ENCODE measurements at regions of chr1 and their contacts with region 1.

Region 1: DNA sequence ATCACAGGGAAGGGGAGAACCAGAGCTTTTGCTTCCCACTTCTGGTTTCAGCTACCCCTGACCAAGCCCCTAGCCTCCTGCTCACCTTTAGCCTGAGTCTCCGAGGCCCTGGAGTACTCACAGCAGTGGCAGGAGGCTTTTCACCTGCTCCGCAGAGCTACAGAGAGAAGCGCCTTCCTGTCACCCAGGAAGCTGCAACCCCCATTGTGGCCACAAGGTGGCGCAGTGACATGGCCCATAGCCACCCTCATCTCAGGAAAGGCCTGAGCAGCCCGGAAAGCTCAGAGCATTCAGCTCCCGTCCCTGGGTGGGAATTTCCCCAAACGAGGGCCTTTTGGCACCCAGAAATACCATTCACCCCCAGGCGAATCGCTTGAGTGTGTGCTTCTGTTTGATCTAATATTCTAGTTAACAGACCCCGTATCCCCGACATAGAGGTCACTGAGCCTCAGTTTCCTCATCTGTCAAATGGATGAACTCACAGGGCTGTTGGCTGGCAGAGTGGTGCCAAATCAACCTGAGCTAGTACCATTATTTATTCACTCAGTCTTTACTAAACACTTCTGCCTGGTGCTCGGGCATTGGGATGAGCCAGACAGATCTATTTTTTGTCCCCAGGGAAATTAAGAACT is 25.3 kb downstream of the A3GALT2 start:
- DNase-seq: peak; percentile 94
- H3K4me3 Mint-ChIP-seq: no peak overlapping the region
- H3K27ac Mint-ChIP-seq: no peak overlapping the region
- H3K4me1 Mint-ChIP-seq: peaks cover 5% of the 10 kb centered on the region
- H3K27me3 Mint-ChIP-seq: no peaks in the 10 kb centered on the region

Region 2: DNA sequence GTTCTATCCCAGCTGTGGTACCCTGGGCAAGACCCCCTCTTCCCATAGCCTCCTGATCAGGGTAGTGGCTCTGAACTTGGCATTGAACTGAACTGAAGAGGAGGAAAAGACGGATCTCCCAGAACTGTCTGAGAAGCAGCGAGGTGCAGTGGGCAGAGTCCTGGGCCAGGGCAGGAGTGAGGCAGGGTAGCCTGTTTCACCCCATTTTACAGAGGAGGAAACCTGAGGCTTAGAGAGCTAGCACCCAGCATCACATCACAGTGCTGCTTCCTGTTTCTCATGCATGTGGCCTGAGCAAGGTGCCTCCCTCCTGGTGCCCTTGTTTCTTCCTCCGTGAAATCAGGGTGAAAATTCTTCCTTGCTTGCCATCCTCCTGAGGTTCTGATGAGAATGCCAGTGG is 22.2 kb before region 1 on chr1:
- CTCF ChIA-PET with region 1: interaction called, 17 read pairs
- POLR2A ChIA-PET with region 1: no interaction called
- intact Hi-C with region 1: no loop called
- DNase-seq: no peak
- H3K4me3 Mint-ChIP-seq: no peak overlapping the region
- H3K27ac Mint-ChIP-seq: peak overlapping the region; percentile 9
- H3K4me1 Mint-ChIP-seq: peaks cover 24% of the 10 kb centered on the region
- H3K27me3 Mint-ChIP-seq: no peaks in the 10 kb centered on the region

Region 3: DNA sequence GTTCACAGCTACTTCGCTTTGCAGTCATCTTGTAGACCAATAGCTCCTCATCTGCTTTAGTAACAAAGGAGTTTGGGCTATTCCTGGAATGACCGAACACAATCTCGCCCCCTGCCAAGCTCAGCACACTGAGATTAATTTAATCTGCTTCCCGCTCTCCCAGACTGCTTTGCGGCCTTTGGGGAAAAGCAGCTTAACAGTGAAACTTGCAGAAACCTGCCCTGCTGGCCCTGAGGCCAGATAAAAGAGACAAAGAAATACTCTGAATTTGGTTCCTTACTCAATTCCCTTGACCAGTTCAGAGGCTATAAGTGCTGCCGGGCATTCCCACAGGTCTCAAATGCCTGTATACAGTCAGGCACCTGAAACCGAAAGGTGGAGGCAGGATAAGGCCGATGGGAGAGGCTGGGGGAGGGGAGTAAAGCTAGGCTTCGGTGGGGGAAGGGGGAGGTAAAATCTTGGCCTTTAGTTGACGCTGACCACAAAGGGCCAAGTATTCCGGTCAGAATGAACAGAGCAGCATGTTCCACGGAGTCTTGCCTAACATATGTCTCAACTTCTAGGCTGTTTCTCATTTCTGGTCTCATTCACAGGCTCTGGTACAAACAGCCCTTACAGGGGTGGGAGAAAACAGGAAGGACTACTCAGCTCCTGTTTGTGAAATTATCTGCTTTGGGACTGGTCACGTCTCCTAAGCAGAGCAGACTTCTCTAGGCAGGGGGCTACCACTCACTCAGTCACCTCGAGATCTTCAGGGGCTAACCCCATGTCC is 43.1 kb after region 1 on chr1:
- CTCF ChIA-PET with region 1: interaction called, 24 read pairs
- POLR2A ChIA-PET with region 1: no interaction called
- intact Hi-C with region 1: no loop called
- DNase-seq: no peak
- H3K4me3 Mint-ChIP-seq: no peak overlapping the region
- H3K27ac Mint-ChIP-seq: no peak overlapping the region
- H3K4me1 Mint-ChIP-seq: peaks cover 26% of the 10 kb centered on the region
- H3K27me3 Mint-ChIP-seq: no peaks in the 10 kb centered on the region

Region 4: GRCh38 chr1:33361532-33362235 is 66.1 kb after region 1 on chr1:
- CTCF ChIA-PET with region 1: interaction called, 103 read pairs
- POLR2A ChIA-PET with region 1: no interaction called
- intact Hi-C with region 1: no loop called
- DNase-seq: no peak
- H3K4me3 Mint-ChIP-seq: no peak overlapping the region
- H3K27ac Mint-ChIP-seq: no peak overlapping the region
- H3K4me1 Mint-ChIP-seq: no peaks in the 10 kb centered on the region
- H3K27me3 Mint-ChIP-seq: no peaks in the 10 kb centered on the region

Region 5: DNA sequence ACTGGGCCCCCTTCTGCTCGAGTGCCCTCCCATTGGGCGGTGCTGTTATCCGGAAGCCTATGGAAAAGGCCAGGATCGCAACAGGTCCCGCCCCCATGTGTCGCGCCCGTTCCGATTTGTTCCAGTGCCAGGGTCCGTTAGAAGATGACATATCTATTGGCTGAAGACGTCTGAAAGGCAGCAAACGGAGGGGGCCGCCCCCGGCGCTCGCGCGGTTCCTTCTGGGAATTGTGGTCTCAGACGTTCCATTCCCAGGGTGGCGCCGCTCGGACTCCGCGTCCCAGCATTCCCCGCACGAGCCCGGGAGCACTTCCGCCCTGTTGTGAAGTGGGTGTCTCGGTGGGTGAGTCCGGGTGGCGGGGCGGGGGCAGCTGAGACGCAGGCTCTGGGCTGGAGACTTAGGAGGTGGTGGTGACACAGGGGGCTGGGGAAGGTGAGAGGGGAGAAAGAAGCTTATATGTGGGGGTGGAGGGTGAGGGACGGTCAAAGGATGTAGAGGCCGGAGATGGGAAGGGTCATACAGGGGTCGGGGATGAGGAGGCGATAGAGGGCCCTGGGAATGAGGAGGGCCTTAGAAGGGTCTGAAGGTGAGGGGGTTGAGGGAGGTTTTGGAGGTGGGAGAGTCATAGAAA is 176.9 kb after region 1 on chr1 and contains the start of gene ZSCAN20:
- CTCF ChIA-PET with region 1: interaction called, 97 read pairs
- POLR2A ChIA-PET with region 1: no interaction called
- intact Hi-C with region 1: loop called (anchors 1 kb)
- DNase-seq: peak; percentile 95
- H3K4me3 Mint-ChIP-seq: peak within 1 kb of the TSS; percentile 83
- H3K27ac Mint-ChIP-seq: peak within 1 kb of the TSS; percentile 77
- H3K4me1 Mint-ChIP-seq: peaks cover 27% of the 10 kb centered on the region
- H3K27me3 Mint-ChIP-seq: no peaks in the 10 kb centered on the region
- total RNA-seq, gene ZSCAN20: 3.8 to 4.1 TPM